B cell (primary cell): ENCODE measurements at regions of chr6 and their contacts with region 1.

Region 1: GRCh38 chr6:7238900-7239589 is 74.0 kb downstream of the SSR1 start:
- DNase-seq: peak; percentile 87
- ATAC-seq: peak; percentile 94
- H3K4me3 ChIP-seq: no peak overlapping the region
- H3K4me3 Mint-ChIP-seq: no peak overlapping the region
- H3K27ac ChIP-seq: peak overlapping the region in 1 of 2 donors; percentile 17
- H3K27ac Mint-ChIP-seq: peak overlapping the region; percentile 60
- H3K4me1 ChIP-seq: peaks cover 12 to 34% of the 10 kb centered on the region in 2 donors
- H3K4me1 Mint-ChIP-seq: peaks cover 49% of the 10 kb centered on the region
- H3K27me3 ChIP-seq: no peaks in the 10 kb centered on the region
- H3K27me3 Mint-ChIP-seq: no peaks in the 10 kb centered on the region
- CTCF ChIP-seq: peak; percentile 72

Region 2: DNA sequence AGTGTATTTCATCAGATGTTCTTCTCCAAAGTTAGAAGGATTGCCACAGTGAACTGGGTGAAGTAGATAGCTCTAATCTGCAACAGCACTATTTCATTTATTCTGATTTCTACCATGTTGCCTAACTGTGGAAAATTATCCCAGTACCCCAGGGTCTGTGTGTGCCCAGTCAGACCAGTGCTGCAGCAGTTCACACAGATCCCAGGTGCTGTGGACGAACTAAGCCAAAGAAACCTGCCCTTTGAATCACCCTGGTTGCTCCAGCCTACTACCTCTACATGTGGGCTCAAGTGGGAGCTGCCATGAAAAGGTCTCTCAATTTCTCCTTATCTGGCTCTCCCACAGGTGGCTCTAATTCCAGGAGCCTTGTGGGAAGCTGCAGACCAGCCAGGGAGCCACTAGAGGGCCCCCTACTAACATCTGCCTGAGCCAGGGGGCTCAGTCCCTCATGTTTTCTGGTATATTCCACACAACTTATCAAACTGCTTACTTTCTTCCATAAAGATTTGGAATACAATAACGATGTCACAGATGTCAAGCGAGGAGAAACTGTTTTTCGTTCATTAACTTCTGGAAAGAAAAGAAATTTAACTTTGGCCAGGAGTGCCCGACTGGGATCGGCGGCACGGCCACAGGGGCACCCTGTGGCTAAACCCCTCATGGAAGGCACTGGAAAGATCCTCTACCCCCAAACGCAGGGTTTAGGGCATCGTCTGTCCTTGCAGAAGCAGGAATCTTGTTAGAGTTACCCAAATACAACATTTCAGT is 682.1 kb before region 1 on chr6:
- CTCF ChIA-PET with region 1: interaction called, 5 read pairs
- POLR2A ChIA-PET with region 1: no interaction called
- intact Hi-C with region 1: loop called (anchors 2 kb)
- DNase-seq: peak; percentile 70
- ATAC-seq: peak; percentile 76
- H3K4me3 ChIP-seq: no peak overlapping the region
- H3K4me3 Mint-ChIP-seq: no peak overlapping the region
- H3K27ac ChIP-seq: no peak overlapping the region
- H3K27ac Mint-ChIP-seq: no peak overlapping the region
- H3K4me1 ChIP-seq: no peaks in the 10 kb centered on the region
- H3K4me1 Mint-ChIP-seq: no peaks in the 10 kb centered on the region
- H3K27me3 ChIP-seq: no peaks in the 10 kb centered on the region
- H3K27me3 Mint-ChIP-seq: no peaks in the 10 kb centered on the region
- CTCF ChIP-seq: peak; percentile 94

Region 3: DNA sequence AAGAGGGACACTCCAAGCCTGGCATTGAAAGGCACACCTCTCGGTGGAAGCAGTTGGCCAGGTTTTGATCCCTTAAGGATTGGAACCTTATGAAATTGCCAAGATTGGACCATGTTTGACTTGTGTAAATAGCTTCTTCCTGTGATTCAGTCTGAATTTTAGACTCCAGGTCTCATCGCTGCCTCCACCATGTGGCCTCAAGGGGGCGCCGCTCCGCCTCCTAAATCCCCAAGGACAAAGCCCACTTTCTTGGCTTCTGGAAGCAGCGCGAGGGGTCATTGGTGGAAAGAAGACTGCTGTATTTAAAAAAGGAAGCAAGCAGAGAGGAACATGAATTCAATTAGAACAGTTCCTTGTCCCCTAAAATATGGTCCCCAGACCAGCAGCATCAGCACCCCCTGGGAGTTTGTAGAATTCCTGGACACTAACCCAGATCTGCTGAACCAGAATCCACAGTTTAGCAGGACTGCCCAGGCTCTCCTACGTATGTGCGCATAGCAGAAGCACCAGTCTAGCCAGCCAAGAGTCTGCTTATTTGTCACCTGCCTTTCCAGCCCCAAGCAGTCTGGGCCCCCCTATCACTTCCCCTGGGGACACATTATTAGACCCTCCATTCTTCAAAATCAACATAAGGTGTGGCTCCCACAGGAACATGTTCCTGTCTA is 542.0 kb before region 1 on chr6:
- CTCF ChIA-PET with region 1: interaction called, 4 read pairs
- POLR2A ChIA-PET with region 1: interaction called, 10 read pairs
- intact Hi-C with region 1: no loop called
- DNase-seq: peak; percentile 31
- ATAC-seq: no peak
- H3K4me3 ChIP-seq: no peak overlapping the region
- H3K4me3 Mint-ChIP-seq: no peak overlapping the region
- H3K27ac ChIP-seq: no peak overlapping the region
- H3K27ac Mint-ChIP-seq: no peak overlapping the region
- H3K4me1 ChIP-seq: no peaks in the 10 kb centered on the region
- H3K4me1 Mint-ChIP-seq: no peaks in the 10 kb centered on the region
- H3K27me3 ChIP-seq: peaks cover 0 to 5% (median 0%) of the 10 kb centered on the region in 4 experiments
- H3K27me3 Mint-ChIP-seq: peaks cover 36% of the 10 kb centered on the region
- CTCF ChIP-seq: peak; percentile 35

Region 4: DNA sequence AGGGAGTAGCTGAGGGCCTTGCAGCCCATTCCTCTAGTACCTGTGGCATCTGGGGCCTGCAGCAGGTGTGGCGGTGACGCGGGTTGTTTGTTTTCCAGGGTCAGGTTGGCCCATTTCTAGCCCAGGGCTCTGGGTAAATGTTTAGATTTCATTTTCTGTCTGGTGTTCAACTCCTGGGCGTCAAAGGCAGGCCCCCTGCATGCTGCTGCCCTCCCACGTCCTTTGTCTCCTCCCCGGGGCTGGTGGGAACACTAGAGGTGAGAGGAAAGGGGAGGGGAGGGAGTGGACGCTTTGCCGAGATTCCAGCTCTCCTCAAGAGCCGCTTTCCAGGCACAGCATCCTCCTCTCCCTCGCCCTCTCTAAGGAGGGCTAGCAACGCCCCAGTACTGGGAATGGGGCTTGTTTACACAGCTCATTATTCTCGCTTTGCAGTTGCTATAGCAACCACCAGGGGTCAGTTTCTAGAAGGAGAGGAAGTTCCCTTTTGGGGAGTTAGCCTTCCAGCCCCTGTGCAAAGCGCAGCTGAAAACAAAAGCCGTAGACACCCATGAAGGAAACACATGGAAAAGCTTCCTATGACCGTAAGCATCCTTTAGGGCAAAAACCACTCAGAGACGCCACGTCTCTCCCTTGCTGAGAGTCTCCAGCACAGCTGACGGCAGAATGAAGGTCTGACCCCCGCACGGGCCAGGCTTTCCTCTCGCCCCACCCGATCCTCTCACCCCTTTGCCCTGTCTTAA is 480.0 kb before region 1 on chr6:
- CTCF ChIA-PET with region 1: interaction called, 77 read pairs
- POLR2A ChIA-PET with region 1: interaction called, 3 read pairs
- intact Hi-C with region 1: loop called (anchors 1 kb)
- DNase-seq: peak; percentile 76
- ATAC-seq: peak; percentile 85
- H3K4me3 ChIP-seq: no peak overlapping the region
- H3K4me3 Mint-ChIP-seq: no peak overlapping the region
- H3K27ac ChIP-seq: no peak overlapping the region
- H3K27ac Mint-ChIP-seq: peak overlapping the region; percentile 29
- H3K4me1 ChIP-seq: peaks cover 13 to 16% of the 10 kb centered on the region in 2 donors
- H3K4me1 Mint-ChIP-seq: peaks cover 17% of the 10 kb centered on the region
- H3K27me3 ChIP-seq: peaks cover 0 to 5% (median 0%) of the 10 kb centered on the region in 4 experiments
- H3K27me3 Mint-ChIP-seq: peaks cover 10% of the 10 kb centered on the region
- CTCF ChIP-seq: peak; percentile 77

Region 5: DNA sequence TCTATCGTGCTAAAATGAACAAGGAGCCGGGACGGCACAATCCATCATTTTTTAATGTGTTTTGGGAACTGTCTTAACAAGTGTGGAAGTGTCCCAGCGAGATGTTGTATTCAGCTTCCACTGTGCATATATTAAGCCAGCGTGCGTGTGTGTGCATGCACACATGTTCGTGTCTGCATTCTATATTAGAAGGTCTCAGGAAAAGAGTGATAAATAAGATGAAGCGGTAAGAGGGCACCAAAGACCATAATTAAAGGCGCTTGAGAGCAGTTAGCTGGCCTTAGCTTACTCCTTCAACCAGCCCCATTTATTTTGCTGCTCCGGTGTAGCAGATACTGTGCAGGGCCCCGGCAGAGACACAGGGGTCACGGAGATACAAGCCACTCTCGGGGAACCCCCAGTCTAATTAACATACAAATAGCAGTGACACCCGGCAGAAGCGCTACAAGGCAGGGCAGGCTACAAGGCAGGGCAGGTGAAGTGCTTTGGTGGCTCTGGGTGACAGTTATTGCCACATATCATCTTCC is 337.8 kb before region 1 on chr6:
- CTCF ChIA-PET with region 1: interaction called, 3 read pairs
- POLR2A ChIA-PET with region 1: no interaction called
- intact Hi-C with region 1: loop called (anchors 10 kb)
- DNase-seq: no peak
- ATAC-seq: no peak
- H3K4me3 ChIP-seq: no peak overlapping the region
- H3K4me3 Mint-ChIP-seq: no peak overlapping the region
- H3K27ac ChIP-seq: no peak overlapping the region
- H3K27ac Mint-ChIP-seq: no peak overlapping the region
- H3K4me1 ChIP-seq: no peaks in the 10 kb centered on the region
- H3K4me1 Mint-ChIP-seq: no peaks in the 10 kb centered on the region
- H3K27me3 ChIP-seq: no peaks in the 10 kb centered on the region
- H3K27me3 Mint-ChIP-seq: peaks cover 16% of the 10 kb centered on the region
- CTCF ChIP-seq: no peak

Region 6: DNA sequence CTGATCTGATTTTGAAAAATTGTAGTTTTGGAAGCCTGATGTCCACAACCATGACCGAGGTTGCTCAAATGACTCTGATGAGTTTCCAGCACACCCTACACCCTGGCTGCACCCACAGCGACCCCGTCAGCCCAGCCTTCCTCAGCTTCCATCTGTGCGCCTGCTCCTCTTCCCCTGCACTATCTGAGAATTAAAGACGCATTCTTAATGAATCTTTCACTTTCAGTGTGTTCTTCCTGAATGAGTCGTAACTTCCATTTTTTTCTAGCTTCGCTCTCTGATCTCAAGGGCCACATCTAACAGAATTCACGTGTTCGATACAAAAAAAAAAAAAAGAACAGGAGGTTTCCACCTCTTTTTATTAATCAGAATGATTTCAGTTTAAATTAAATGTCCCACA is 152.6 kb before region 1 on chr6:
- CTCF ChIA-PET with region 1: interaction called, 12 read pairs
- POLR2A ChIA-PET with region 1: no interaction called
- intact Hi-C with region 1: no loop called
- DNase-seq: peak; percentile 74
- ATAC-seq: peak; percentile 79
- H3K4me3 ChIP-seq: peak overlapping the region; percentile 30 to 89 (median 47)
- H3K4me3 Mint-ChIP-seq: peak overlapping the region; percentile 86
- H3K27ac ChIP-seq: peak overlapping the region; percentile 50 to 73
- H3K27ac Mint-ChIP-seq: peak overlapping the region; percentile 88
- H3K4me1 ChIP-seq: peaks cover 23 to 24% of the 10 kb centered on the region in 2 donors
- H3K4me1 Mint-ChIP-seq: peaks cover 27% of the 10 kb centered on the region
- H3K27me3 ChIP-seq: no peaks in the 10 kb centered on the region
- H3K27me3 Mint-ChIP-seq: no peaks in the 10 kb centered on the region
- CTCF ChIP-seq: no peak

Region 7: DNA sequence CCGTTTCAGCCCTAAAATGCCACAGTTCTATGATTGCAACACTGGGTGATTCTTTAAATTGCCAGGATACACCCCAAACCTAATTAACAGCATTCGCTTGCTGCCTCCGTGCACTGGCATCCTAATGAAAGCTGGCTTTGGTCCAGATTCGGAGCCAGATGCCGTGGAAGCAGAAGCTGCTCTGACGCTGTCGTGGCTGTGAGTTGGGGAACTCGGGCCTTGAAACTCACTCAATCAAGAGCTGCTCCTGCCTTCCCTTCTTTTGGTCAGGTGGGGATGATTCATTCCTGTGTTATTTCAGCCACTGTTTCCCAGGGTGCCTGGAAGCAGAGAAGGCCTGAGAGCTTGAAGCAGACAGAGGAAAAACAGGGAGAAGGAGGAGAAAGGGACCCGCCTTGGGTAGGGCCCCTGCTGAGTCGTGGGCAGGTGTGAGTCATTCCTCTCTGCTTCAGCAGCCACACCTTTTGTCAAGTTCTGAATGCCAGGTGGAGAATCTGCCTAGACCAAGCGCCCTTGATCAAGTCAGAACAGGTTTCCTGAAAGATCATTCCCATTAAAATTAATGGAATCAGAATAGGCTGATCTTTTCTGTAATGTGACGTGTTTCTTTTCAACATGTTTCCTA is 266.3 kb after region 1 on chr6:
- CTCF ChIA-PET with region 1: no interaction called
- POLR2A ChIA-PET with region 1: no interaction called
- intact Hi-C with region 1: no loop called
- DNase-seq: peak; percentile 13
- ATAC-seq: no peak
- H3K4me3 ChIP-seq: no peak overlapping the region
- H3K4me3 Mint-ChIP-seq: no peak overlapping the region
- H3K27ac ChIP-seq: no peak overlapping the region
- H3K27ac Mint-ChIP-seq: no peak overlapping the region
- H3K4me1 ChIP-seq: peaks cover 0 to 6% of the 10 kb centered on the region in 2 donors
- H3K4me1 Mint-ChIP-seq: peaks cover 8% of the 10 kb centered on the region
- H3K27me3 ChIP-seq: peaks cover 0 to under 1% (median 0%) of the 10 kb centered on the region in 4 experiments
- H3K27me3 Mint-ChIP-seq: peaks cover 19% of the 10 kb centered on the region
- CTCF ChIP-seq: no peak